CD8-positive, alpha-beta memory T cell (primary cell): ENCODE measurements at regions of chr22 and their contacts with region 1.

Region 1: GRCh38 chr22:30262917-30263741 is 3.5 kb downstream of the OSM start:
- DNase-seq: peak; percentile 64 to 84 (median 74)
- H3K4me3 ChIP-seq: peak overlapping the region; percentile 7
- H3K4me3 Mint-ChIP-seq: peak overlapping the region; percentile 37 to 81 (median 63)
- H3K27ac ChIP-seq: no peak overlapping the region
- H3K27ac Mint-ChIP-seq: peak overlapping the region in 7 of 8 donors; percentile 45 to 93 (median 82)
- H3K4me1 ChIP-seq: peaks cover 38% of the 10 kb centered on the region
- H3K4me1 Mint-ChIP-seq: peaks cover 36 to 46% (median 44%) of the 10 kb centered on the region in 3 donors
- H3K27me3 ChIP-seq: no peaks in the 10 kb centered on the region
- H3K27me3 Mint-ChIP-seq: peaks cover 0 to 1% of the 10 kb centered on the region in 2 donors

Region 2: GRCh38 chr22:30104501-30105156 is 158.5 kb before region 1 on chr22:
- CTCF ChIA-PET with region 1: interaction called, 14 read pairs
- POLR2A ChIA-PET with region 1: no interaction called
- DNase-seq: peak in 1 of 5 donors; percentile 8
- H3K4me3 ChIP-seq: no peak overlapping the region
- H3K4me3 Mint-ChIP-seq: no peak overlapping the region
- H3K27ac ChIP-seq: no peak overlapping the region
- H3K27ac Mint-ChIP-seq: no peak overlapping the region
- H3K4me1 ChIP-seq: peaks cover 16% of the 10 kb centered on the region
- H3K4me1 Mint-ChIP-seq: peaks cover 8 to 25% (median 15%) of the 10 kb centered on the region in 3 donors
- H3K27me3 ChIP-seq: no peaks in the 10 kb centered on the region
- H3K27me3 Mint-ChIP-seq: peaks cover 0 to 6% of the 10 kb centered on the region in 2 donors

Region 3: DNA sequence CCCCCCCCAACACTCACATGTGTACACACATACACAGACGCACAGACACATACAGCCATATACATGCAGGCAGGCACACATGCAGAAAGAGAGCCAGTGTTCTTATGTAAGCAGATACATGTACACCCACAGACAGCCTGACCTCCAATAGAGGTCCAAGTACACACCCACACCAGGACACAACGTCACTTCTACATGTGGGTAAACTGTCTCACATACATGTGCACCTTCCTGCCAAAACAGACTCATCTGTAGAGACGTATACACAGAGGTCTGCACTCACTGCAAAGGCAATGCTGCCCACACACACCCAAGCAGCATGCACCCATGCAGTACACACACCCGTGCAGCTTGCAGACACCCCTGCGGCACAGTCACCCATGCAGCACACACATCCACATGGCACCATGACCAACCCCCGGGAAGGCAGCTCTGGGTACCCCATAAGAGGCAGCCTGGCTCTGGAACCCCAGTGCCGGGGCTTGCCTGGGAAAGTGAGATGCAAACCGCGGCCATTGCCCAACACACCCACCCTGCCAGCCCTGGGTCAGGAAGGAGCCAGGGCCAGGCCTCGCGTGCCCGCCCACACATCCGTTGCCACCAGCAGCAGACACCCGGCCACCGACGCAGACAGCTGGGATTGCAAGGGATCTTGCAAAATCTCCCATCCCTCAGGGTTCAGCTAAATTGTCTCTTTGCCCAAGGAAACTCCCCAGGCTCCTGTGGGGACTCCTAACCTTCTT is 16.1 kb after region 1 on chr22:
- CTCF ChIA-PET with region 1: interaction called, 82 read pairs
- POLR2A ChIA-PET with region 1: no interaction called
- DNase-seq: no peak
- H3K4me3 ChIP-seq: no peak overlapping the region
- H3K4me3 Mint-ChIP-seq: no peak overlapping the region
- H3K27ac ChIP-seq: no peak overlapping the region
- H3K27ac Mint-ChIP-seq: peak overlapping the region in 1 of 8 donors; percentile 82
- H3K4me1 ChIP-seq: peaks cover 32% of the 10 kb centered on the region
- H3K4me1 Mint-ChIP-seq: peaks cover 14 to 20% (median 15%) of the 10 kb centered on the region in 3 donors
- H3K27me3 ChIP-seq: no peaks in the 10 kb centered on the region
- H3K27me3 Mint-ChIP-seq: peaks cover 4 to 31% of the 10 kb centered on the region in 2 donors

Region 4: GRCh38 chr22:30314915-30315314 is 51.8 kb after region 1 on chr22:
- CTCF ChIA-PET with region 1: no interaction called
- POLR2A ChIA-PET with region 1: no interaction called
- DNase-seq: peak in 4 of 5 donors; percentile 24 to 65 (median 44)
- H3K4me3 ChIP-seq: no peak overlapping the region
- H3K4me3 Mint-ChIP-seq: peak overlapping the region in 4 of 7 donors; percentile 8 to 65 (median 25)
- H3K27ac ChIP-seq: no peak overlapping the region
- H3K27ac Mint-ChIP-seq: peak overlapping the region; percentile 26 to 96 (median 88)
- H3K4me1 ChIP-seq: peaks cover 100% of the 10 kb centered on the region
- H3K4me1 Mint-ChIP-seq: peaks cover 95 to 100% (median 98%) of the 10 kb centered on the region in 3 donors
- H3K27me3 ChIP-seq: no peaks in the 10 kb centered on the region
- H3K27me3 Mint-ChIP-seq: peaks cover 0 to 1% of the 10 kb centered on the region in 2 donors